ENCODE measurements at regions of chr7 and their contacts with region 1.

Region 1: DNA sequence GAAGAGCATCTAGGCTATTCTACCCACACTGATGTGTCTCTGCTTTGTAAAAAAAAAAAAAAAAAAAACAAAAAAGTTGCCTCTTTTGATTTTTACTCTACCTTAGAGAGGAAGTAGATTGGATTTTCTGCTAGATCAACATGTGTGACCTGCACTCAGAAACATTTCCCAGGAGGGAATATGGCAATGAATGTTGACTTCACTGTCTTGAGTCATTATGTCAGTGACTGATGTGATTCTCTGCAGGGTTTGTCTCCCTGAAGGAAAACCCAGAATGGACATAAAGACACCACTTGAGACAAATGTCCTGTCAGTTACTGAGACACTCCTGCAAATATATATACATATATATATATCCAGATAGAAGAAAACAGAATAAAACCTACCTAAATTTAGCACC is 370.3 kb downstream of the BMPER start:
- DNase-seq: no peak
- ATAC-seq: no peak

Region 2: GRCh38 chr7:34247468-34247867 is 28.2 kb before region 1 on chr7:
- intact Hi-C with region 1: loop called (anchors 1 kb)
- DNase-seq: no peak
- ATAC-seq: no peak